ENCODE measurements at regions of chr7 and their contacts with region 1.

Region 1: GRCh38 chr7:73329861-73330581 is 2.1 kb downstream of the FKBP6 start:
- DNase-seq: no peak
- H3K4me3 ChIP-seq: no peak overlapping the region
- H3K27ac ChIP-seq: no peak overlapping the region
- H3K4me1 ChIP-seq: peaks cover 0 to 9% (median 5%) of the 10 kb centered on the region in 4 experiments; a peak in 6 of 7 replicates
- H3K27me3 ChIP-seq: no peaks in the 10 kb centered on the region
- CTCF ChIP-seq: no peak
- EP300 ChIP-seq: no peak
- POLR2A ChIP-seq: no peak
- RAD21 ChIP-seq: no peak

Region 2: GRCh38 chr7:73312831-73313526 is 17.0 kb before region 1 on chr7:
- CTCF ChIA-PET with region 1: interaction called, 11 read pairs
- POLR2A ChIA-PET with region 1: interaction called, 3 read pairs
- DNase-seq: no peak
- H3K4me3 ChIP-seq: no peak overlapping the region
- H3K27ac ChIP-seq: no peak overlapping the region
- H3K4me1 ChIP-seq: no peaks in the 10 kb centered on the region
- H3K27me3 ChIP-seq: peaks cover 0 to 2% (median 0%) of the 10 kb centered on the region in 4 experiments; a peak in 1 of 7 replicates
- CTCF ChIP-seq: no peak
- EP300 ChIP-seq: no peak
- POLR2A ChIP-seq: no peak
- RAD21 ChIP-seq: no peak

Region 3: GRCh38 chr7:73342645-73343044 is 12.6 kb after region 1 on chr7:
- CTCF ChIA-PET with region 1: interaction called, 36 read pairs
- POLR2A ChIA-PET with region 1: interaction called, 4 read pairs
- DNase-seq: no peak
- H3K4me3 ChIP-seq: no peak overlapping the region
- H3K27ac ChIP-seq: no peak overlapping the region
- H3K4me1 ChIP-seq: peaks cover 0 to 17% (median 4%) of the 10 kb centered on the region in 4 experiments; a peak in 5 of 7 replicates
- H3K27me3 ChIP-seq: no peaks in the 10 kb centered on the region; a peak in 1 of 7 replicates
- CTCF ChIP-seq: peak in 2 of 3 experiments; percentile 48 to 59; a peak in 3 of 4 replicates
- EP300 ChIP-seq: no peak
- POLR2A ChIP-seq: no peak
- RAD21 ChIP-seq: peak; percentile 42 to 63

Region 4: GRCh38 chr7:73353243-73353642 is 23.2 kb after region 1 on chr7:
- CTCF ChIA-PET with region 1: no interaction called
- POLR2A ChIA-PET with region 1: no interaction called
- DNase-seq: no peak
- H3K4me3 ChIP-seq: no peak overlapping the region
- H3K27ac ChIP-seq: no peak overlapping the region
- H3K4me1 ChIP-seq: peaks cover 0 to 11% (median 0%) of the 10 kb centered on the region in 4 experiments; a peak in 3 of 7 replicates
- H3K27me3 ChIP-seq: no peaks in the 10 kb centered on the region
- CTCF ChIP-seq: no peak
- EP300 ChIP-seq: no peak
- POLR2A ChIP-seq: no peak
- RAD21 ChIP-seq: no peak

Region 5: DNA sequence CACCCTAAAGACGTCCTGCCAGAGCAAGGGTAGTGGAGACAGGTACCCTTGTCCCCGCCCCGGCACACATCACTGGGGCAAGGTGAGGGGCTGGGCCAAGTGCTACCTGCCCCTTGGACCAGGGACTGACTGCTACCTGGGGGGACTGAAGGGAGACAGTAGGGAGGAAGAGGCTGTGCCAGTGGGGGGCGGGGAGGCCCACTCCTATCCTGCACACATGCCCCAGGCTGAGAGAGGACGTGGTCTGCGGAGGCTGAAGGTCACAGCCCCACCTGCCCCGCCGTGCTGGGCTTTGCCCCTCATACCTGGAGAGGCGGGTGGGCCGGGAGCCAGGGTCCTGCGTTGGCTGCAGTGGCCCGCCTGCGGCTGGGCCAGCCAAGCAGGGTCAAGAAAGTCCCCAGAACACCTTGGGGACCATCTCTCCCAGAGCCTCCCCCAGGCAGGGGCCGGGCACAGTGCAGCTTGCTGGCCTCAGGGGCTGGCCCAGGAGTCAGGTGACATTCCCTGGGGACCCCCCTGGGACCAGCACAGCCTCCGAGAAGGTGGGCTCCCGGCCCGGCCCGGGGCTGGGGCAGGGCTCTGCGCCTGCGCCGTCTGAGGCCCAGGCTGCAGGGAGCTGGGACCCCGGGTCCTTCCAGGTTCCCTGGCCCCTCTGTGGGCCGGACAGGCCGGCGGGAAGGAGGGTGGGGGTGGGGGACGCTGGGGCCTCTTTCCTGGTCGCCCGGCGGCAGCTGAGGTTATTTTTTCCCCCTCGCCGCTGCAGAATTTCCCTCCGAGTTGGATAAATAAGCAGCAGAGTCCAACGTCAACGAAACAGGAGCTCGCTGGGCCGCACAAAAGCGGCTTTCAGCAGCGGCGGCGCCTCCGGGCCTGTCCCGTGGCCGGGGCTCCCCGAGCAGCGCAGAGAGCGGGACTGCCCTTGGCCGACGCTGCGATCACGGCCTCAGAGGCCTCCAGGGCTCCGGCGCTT is 93.8 kb after region 1 on chr7:
- CTCF ChIA-PET with region 1: no interaction called
- POLR2A ChIA-PET with region 1: no interaction called
- DNase-seq: peak in 1 of 2 experiments; percentile 82
- H3K4me3 ChIP-seq: peak overlapping the region; percentile 29 to 53 (median 34); a peak in 6 of 8 replicates
- H3K27ac ChIP-seq: no peak overlapping the region
- H3K4me1 ChIP-seq: peaks cover 0 to 13% (median 9%) of the 10 kb centered on the region in 4 experiments; a peak in 6 of 7 replicates
- H3K27me3 ChIP-seq: no peaks in the 10 kb centered on the region
- CTCF ChIP-seq: no peak
- EP300 ChIP-seq: no peak
- POLR2A ChIP-seq: peak in 1 of 2 experiments; percentile 15; a peak in 1 of 3 replicates
- RAD21 ChIP-seq: no peak

Region 6: GRCh38 chr7:73433924-73434700 is 104.1 kb after region 1 on chr7:
- CTCF ChIA-PET with region 1: interaction called, 11 read pairs
- POLR2A ChIA-PET with region 1: no interaction called
- DNase-seq: peak; percentile 36 to 76
- H3K4me3 ChIP-seq: peak overlapping the region in 3 of 4 experiments; percentile 39 to 61 (median 44); a peak in 6 of 8 replicates
- H3K27ac ChIP-seq: no peak overlapping the region
- H3K4me1 ChIP-seq: peaks cover 0 to 10% (median 5%) of the 10 kb centered on the region in 4 experiments; a peak in 6 of 7 replicates
- H3K27me3 ChIP-seq: peaks cover 9 to 20% (median 18%) of the 10 kb centered on the region in 4 experiments
- CTCF ChIP-seq: no peak
- EP300 ChIP-seq: no peak
- POLR2A ChIP-seq: no peak
- RAD21 ChIP-seq: no peak

Region 7: DNA sequence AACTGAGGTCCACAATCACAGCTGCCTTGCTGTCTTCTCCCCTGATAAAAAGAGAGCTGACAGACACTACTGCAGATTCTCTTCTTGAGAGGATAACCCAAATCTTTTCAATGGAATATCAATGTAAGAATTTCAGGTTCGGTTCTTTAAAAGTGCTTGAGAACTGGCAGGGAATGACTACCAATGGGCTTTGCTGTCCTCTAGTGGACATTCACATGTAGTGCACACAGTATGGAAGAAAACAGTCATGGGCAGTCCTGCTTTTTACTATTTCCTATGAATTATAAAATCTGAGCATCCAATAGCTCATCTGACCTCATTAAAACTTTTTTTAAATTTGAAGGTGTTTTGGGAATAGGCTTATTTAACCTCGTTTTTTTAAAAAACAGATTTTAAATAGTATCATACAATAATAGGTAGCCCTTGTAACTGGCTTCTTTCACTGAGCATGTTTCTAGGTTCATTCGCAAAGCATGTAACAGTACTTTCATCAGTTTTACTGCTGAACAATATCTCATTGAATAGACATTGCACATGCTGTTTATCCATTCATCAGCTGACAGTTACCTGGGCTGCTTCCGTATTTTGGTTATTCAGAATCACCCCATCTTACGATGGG is 121.9 kb after region 1 on chr7:
- CTCF ChIA-PET with region 1: interaction called, 14 read pairs
- POLR2A ChIA-PET with region 1: no interaction called
- DNase-seq: no peak
- H3K4me3 ChIP-seq: no peak overlapping the region
- H3K27ac ChIP-seq: no peak overlapping the region
- H3K4me1 ChIP-seq: no peaks in the 10 kb centered on the region
- H3K27me3 ChIP-seq: no peaks in the 10 kb centered on the region
- CTCF ChIP-seq: peak in 2 of 3 experiments; percentile 82 to 90; a peak in 3 of 4 replicates
- EP300 ChIP-seq: no peak
- POLR2A ChIP-seq: no peak
- RAD21 ChIP-seq: peak; percentile 93 to 95

Region 8: DNA sequence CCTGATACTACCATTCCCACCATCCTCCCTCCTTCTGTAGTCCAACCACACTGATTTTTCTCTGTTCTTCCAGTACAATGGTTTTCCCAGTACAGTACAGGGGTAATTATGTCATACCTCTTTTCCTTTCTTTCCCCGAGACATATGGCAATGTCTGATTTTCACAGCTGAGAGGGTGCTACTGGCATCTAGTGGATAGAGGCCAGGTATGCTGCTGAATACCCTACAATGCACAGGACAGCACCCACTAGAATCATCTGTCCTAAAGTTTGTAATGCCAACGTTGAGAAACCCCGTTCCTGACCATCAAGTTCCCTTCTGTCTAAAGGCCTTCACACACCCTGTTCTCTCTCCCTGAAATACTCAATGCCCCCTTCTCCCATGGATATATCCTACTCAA is 171.3 kb after region 1 on chr7:
- CTCF ChIA-PET with region 1: no interaction called
- POLR2A ChIA-PET with region 1: no interaction called
- DNase-seq: no peak
- H3K4me3 ChIP-seq: no peak overlapping the region
- H3K27ac ChIP-seq: no peak overlapping the region
- H3K4me1 ChIP-seq: no peaks in the 10 kb centered on the region
- H3K27me3 ChIP-seq: no peaks in the 10 kb centered on the region
- CTCF ChIP-seq: no peak
- EP300 ChIP-seq: no peak
- POLR2A ChIP-seq: no peak
- RAD21 ChIP-seq: no peak

Region 9: DNA sequence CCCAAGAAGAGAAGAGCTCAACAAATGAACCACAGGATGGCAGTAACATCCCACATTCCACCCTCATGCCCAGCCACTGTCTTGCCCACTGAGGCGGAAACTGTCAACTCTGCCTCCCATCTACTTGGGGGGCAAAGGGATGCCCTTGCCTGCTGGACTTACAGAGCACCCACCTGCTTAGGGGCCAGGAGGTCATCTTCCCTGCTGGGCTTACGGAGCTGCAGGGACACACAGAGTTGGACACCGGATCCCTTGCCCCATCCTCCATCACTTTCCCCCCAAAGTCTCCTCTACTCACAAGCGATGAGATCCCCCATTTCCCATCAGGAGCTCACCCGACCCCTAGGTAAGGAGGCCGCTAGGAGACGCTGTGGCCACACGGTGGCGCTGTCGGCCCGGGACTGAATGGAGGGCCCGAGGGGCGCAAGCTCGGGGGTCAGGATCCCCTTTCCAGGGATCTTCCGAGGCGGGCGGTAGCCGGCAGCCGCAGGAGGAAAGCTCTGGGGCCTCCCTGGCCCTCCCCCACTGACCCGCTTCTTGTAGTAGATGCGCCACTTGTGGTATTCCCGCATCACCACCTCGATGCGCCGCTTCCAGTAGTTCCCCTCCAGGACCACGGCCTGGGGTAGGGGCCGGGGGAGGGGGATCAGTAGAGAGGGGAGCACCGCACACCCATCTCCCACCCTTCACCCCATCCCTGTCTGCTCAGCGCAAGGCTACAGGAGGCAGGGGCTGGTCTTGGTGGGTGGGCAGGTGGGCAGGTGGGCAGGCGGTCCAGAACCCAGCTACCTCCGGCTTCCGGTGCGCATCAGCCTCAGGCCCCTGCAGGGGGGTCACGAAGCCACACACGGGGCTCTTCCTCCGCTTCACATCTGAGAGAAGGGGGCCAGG is 277.0 kb after region 1 on chr7:
- CTCF ChIA-PET with region 1: no interaction called
- POLR2A ChIA-PET with region 1: no interaction called
- DNase-seq: peak in 1 of 2 experiments; percentile 97
- H3K4me3 ChIP-seq: peak overlapping the region in 3 of 4 experiments; percentile 11 to 61 (median 26); a peak in 5 of 8 replicates
- H3K27ac ChIP-seq: no peak overlapping the region
- H3K4me1 ChIP-seq: peaks cover 0 to 7% (median 4%) of the 10 kb centered on the region in 4 experiments; a peak in 6 of 7 replicates
- H3K27me3 ChIP-seq: no peaks in the 10 kb centered on the region; a peak in 1 of 7 replicates
- CTCF ChIP-seq: peak; percentile 91 to 97 (median 92)
- EP300 ChIP-seq: no peak
- POLR2A ChIP-seq: no peak
- RAD21 ChIP-seq: peak; percentile 96 to 97